ENCODE measurements at regions of chr2 and their contacts with region 1.

Region 1: DNA sequence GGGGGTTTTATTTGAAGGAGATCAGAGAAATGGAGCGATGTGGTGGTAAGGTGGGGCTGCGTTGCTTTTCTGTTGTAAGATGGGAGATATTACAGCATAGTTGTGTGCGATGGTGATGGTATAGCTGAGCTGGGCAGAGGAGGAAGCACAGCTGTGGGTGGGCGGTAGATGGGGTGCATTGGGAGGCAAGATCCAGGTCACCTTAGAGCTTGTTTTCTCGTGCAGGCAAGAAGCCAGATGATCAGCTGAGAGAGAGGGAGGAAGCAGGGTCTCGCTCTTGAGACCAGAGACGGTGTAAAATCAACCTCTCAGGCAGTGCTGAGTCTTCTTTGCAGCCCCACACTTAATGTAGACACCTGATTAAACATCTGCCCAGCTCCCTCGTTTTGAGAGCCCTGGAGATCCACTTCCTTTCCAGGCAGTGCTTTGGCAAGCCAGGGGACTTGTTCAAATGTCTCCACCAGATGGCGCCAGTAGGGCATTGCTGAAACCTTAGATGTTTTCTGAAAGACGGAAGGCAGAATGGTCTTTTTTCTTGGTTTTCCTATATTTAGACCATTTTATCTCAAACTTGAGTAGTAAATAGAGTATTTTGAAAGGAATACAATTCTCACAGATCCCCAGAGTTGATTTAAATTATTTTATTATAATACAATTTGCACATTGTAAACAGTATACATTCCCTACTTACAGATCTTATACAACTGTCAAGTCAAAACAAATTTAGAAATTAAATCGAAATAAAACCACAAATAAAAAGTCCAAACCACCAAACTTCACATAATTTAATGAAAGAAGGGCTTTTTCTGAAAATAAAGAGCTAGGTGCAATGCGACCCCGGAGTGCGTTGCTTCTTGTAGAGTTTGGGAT is 21.1 kb upstream of the LYPD6B start:
- DNase-seq: peak; percentile 31 to 83 (median 62)
- ATAC-seq: peak; percentile 50 to 72 (median 56)
- H3K4me3 ChIP-seq: no peak overlapping the region
- H3K4me3 Mint-ChIP-seq: no peak overlapping the region
- H3K27ac ChIP-seq: no peak overlapping the region
- H3K27ac Mint-ChIP-seq: no peak overlapping the region
- H3K4me1 ChIP-seq: peaks cover 0 to 3% of the 10 kb centered on the region in 2 experiments
- H3K4me1 Mint-ChIP-seq: peaks cover 0 to 11% (median 4%) of the 10 kb centered on the region in 3 donors
- H3K27me3 ChIP-seq: peaks cover 0 to 5% of the 10 kb centered on the region in 2 experiments
- H3K27me3 Mint-ChIP-seq: peaks cover 0 to 4% of the 10 kb centered on the region in 2 donors

Region 2: DNA sequence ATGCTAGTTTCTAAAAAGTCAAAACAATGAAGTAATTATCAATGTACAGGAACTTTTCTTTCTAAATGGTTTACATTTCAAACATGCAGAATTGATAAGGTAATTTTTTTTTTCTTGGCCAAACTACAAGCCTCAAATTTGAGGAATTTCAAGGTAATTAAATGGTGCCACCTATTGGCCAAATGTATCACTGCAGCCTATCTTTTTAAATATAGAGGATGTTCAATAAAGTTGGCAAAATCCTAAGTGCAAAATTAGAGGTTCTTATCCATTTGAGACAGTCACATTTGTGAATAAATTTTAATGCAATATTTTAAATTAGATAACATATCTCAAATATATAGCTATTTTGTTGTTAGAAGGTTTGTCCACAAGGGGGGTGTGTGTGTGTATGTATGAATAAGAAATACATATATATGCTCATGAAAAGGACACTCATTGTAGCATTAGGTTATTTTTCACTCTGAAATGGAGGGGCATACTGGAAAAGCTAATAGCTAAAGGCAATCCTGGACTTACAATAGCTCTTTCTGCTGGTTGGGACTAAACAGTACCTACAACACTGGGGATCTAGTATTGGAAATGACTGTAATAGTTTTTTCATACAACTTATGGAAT is 544.1 kb after region 1 on chr2:
- CTCF ChIA-PET with region 1: interaction called, 19 to 46 read pairs
- POLR2A ChIA-PET with region 1: no interaction called
- DNase-seq: peak in 6 of 35 experiments; percentile 2 to 62 (median 8)
- ATAC-seq: no peak
- H3K4me3 ChIP-seq: no peak overlapping the region
- H3K4me3 Mint-ChIP-seq: no peak overlapping the region
- H3K27ac ChIP-seq: no peak overlapping the region
- H3K27ac Mint-ChIP-seq: no peak overlapping the region
- H3K4me1 ChIP-seq: no peaks in the 10 kb centered on the region
- H3K4me1 Mint-ChIP-seq: peaks cover 0 to 5% (median 4%) of the 10 kb centered on the region in 3 donors
- H3K27me3 ChIP-seq: peaks cover 0 to 3% of the 10 kb centered on the region in 2 experiments
- H3K27me3 Mint-ChIP-seq: peaks cover 0 to 9% of the 10 kb centered on the region in 2 donors

Measured in T-cell (primary cell).